Cardiac septum (tissue), 1 donor: ENCODE measurements at regions of chr19 and their contacts with region 1.

Region 1: GRCh38 chr19:43784981-43785808 is 4.4 kb upstream of the KCNN4 start:
- DNase-seq: peak; percentile 79

Region 2: DNA sequence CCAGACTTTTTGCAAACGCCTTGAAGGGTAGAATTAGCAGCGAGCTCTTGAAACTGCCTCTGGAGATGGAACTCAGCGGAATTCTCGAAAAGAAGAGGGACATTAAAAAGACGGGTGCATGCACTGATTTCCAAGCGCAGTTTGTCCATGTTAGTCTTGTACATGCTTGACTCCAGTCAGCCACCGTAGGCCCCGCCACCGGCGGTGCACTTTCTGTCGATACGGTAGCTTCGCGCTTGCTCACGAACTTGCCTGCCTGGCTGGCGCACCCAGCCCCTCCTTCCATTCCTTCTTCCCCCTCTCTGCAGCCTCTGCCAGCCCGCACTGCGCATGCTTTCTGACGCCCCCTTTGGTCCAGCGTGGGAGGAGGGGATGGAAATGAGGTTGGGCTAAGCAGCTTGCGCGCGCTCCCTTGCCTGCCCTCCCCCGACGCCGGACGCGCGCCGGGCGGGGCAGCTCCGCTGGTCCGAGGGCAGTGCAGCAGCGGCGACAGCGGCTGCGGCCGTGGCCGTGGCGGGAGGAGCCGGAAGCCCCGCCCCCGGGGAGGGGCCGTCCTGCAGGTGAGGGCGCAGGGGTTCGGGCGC is 252.1 kb before region 1 on chr19 and contains the start of gene ZNF575:
- intact Hi-C with region 1: loop called (anchors 10 kb)
- DNase-seq: peak; percentile 95
- total RNA-seq, gene ZNF575: 1.7 TPM

Region 3: GRCh38 chr19:43675269-43675879 is 109.8 kb before region 1 on chr19:
- intact Hi-C with region 1: loop called (anchors 10 kb)
- DNase-seq: no peak

Region 4: DNA sequence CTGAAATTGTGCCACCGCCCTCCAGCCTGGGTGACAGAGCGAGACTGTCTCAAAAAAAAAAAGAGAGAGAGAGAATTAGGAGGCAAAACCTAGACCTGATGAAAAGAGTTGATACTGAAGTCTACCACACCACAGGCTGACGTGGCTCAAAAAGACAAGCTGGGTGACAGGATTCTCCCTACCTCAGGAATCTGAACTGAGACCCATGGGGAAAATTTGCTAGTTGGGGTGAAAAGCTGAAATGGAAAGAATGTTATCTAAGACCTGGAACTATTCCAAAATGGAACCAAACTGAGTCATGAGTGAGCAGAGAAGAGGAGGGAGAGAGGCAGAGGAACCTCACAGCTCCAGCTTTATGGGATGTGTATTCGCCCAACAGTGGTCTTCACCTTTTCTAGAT is 42.2 kb before region 1 on chr19:
- intact Hi-C with region 1: loop called (anchors 1 kb)
- DNase-seq: no peak